ENCODE measurements at regions of chr9 and their contacts with region 1.

Region 1: GRCh38 chr9:14170973-14171596 is 142.9 kb downstream of the NFIB start:
- DNase-seq: no peak

Region 2: DNA sequence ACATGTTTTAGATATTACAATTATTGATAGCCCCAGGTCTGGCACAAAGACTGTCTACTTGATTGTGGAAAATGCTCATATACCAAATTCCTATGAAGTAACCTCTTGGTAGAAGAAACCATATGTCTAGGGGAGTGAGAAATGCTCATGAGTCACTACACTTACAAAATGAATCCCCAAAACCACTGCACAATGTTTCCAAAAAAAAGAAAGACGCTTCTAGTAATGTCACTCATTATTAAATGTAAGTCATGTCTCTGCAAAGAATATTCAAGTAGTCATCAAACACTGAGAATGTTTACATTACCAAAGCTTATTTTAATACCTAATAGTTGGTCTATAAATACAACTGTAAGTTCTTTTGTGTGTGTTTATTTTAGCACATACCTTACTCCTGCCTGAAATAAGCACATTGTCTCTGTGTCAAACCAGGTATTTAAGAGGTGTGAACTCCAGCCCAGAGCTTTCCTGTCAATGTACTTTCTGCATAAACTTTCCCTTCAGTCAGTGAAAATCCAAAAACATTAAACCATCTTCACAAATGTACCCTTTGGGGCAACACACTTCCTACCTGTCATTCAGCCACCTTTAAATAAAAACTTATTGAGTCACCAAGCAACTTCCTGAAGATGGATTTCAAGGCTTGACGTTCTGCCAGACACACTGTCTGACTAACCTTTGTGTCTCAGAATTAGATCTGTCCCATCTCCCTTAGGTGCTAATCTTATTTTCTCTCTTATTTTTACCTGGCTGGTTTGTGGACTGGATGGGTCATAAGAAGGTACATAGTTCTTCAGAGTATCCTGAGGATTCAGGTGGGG is 51.2 kb before region 1 on chr9:
- intact Hi-C with region 1: loop called in 1 of 2 experiments (anchors 10 kb)
- DNase-seq: no peak

Region 3: GRCh38 chr9:14183001-14183400 is 11.9 kb after region 1 on chr9:
- intact Hi-C with region 1: no loop called
- DNase-seq: no peak

Region 4: DNA sequence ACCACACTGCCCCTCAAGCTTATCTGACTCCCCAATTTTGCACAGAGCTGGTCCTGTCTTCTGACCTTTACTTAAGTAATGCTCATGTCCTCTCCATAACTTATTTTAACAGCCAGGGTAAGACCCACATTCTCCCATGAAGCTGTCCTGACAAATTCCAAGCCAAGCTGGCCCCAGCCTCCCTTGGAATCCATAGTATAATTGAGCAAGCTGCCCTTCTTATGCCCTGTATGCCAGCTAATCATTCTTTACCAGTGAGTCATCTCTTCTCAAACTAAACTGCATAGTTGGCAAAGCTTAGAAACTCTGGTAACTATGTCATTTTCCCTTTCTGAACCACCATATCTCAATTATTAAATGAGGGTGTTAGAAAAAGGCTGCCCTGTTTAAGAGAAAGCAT is 50.5 kb after region 1 on chr9:
- intact Hi-C with region 1: no loop called
- DNase-seq: no peak